Mucosa of descending colon (tissue), 3 donors: ENCODE measurements at regions of chr12 and their contacts with region 1.

Region 1: DNA sequence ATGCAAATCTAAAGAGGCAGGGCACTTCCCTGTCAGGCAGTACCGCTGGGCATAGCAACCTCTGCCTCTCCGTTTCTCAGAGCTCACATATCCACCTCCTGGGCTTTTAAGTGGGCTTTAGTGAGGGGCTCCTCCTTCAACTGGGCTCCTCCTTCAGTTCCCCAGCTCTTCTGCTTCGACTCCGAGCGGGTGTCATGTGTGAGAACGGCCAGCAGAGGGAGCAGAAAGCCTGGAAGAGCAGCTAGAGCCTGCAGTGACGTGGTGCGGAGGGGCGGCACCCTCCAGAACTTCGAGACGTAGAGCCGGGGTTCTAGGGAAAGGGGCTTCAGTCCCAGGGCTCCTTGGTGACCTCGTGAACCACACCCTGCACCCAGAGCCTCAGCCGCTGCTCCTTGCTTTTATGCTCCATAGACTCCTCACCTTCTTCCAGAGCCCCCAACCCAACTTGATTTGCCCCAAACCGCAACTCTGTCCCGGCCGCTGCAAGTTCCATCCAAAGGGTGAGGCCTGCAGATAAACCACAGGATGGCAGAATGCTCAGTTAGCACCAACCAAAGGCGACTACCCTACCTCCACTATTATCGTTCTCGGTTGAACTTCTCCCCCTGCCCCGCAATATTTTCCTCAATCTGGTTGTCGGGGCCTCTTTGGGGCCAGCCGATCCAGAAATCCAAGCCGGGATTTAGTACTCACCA is 383 bp upstream of the GLI1 start:
- DNase-seq: peak; percentile 93 to 96 (median 95)
- ATAC-seq: peak; percentile 80
- H3K4me3 ChIP-seq: peak overlapping the region; percentile 22
- H3K4me1 ChIP-seq: peaks cover 27% of the 10 kb centered on the region
- CTCF ChIP-seq: peak; percentile 94

Region 2: DNA sequence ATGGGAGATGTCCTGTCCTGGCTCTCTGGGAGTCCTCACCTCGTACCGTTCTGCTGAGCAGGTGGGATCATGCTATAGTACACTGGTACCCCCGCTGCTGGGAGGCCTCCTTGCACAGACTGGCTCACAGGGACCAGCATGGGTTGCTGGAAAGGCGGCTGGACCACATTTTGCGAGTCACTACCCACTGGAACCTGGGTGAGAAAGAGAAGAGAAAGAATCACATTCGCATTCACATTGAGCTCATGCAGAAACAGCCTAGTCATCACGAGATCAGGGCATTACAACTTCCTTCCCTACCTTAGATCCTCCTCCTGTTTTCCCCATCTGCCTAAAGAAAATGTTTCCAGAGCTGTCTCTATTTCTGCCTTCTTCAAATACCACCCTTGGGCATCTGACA is 190.9 kb before region 1 on chr12:
- intact Hi-C with region 1: loop called (anchors 10 kb)
- DNase-seq: no peak
- ATAC-seq: no peak
- H3K4me3 ChIP-seq: no peak overlapping the region
- H3K4me1 ChIP-seq: no peaks in the 10 kb centered on the region
- CTCF ChIP-seq: no peak

Region 3: GRCh38 chr12:57276935-57277563 is 182.2 kb before region 1 on chr12:
- intact Hi-C with region 1: loop called in 1 of 2 experiments (anchors 10 kb)
- DNase-seq: peak in 1 of 3 donors; percentile 48
- ATAC-seq: no peak
- H3K4me3 ChIP-seq: no peak overlapping the region
- H3K4me1 ChIP-seq: peaks cover 11% of the 10 kb centered on the region
- CTCF ChIP-seq: no peak

Region 4: GRCh38 chr12:57309420-57309819 is 149.8 kb before region 1 on chr12:
- intact Hi-C with region 1: loop called in 1 of 2 experiments (anchors 10 kb)
- DNase-seq: no peak
- ATAC-seq: peak; percentile 91
- H3K4me3 ChIP-seq: no peak overlapping the region
- H3K4me1 ChIP-seq: no peaks in the 10 kb centered on the region
- CTCF ChIP-seq: no peak